ENCODE measurements at regions of chr17 and their contacts with region 1.

Region 1: GRCh38 chr17:48878918-48879898 is 13.4 kb upstream of the ATP5MC1 start:
- DNase-seq: peak; percentile 78
- H3K4me3 Mint-ChIP-seq: no peak overlapping the region
- H3K27ac Mint-ChIP-seq: no peak overlapping the region
- H3K4me1 Mint-ChIP-seq: no peaks in the 10 kb centered on the region
- H3K27me3 Mint-ChIP-seq: no peaks in the 10 kb centered on the region
- CTCF ChIP-seq: peak; percentile 83

Region 2: GRCh38 chr17:48678141-48678971 is 200.9 kb before region 1 on chr17:
- CTCF ChIA-PET with region 1: interaction called, 89 read pairs
- POLR2A ChIA-PET with region 1: interaction called, 7 read pairs
- intact Hi-C with region 1: loop called (anchors 2 kb)
- DNase-seq: peak; percentile 72
- H3K4me3 Mint-ChIP-seq: no peak overlapping the region
- H3K27ac Mint-ChIP-seq: no peak overlapping the region
- H3K4me1 Mint-ChIP-seq: peaks cover 4% of the 10 kb centered on the region
- H3K27me3 Mint-ChIP-seq: peaks cover 19% of the 10 kb centered on the region
- CTCF ChIP-seq: peak; percentile 96

Region 3: GRCh38 chr17:48804925-48805411 is 74.2 kb before region 1 on chr17:
- CTCF ChIA-PET with region 1: interaction called, 56 read pairs
- POLR2A ChIA-PET with region 1: interaction called, 4 read pairs
- intact Hi-C with region 1: loop called (anchors 1 kb)
- DNase-seq: peak; percentile 67
- H3K4me3 Mint-ChIP-seq: no peak overlapping the region
- H3K27ac Mint-ChIP-seq: no peak overlapping the region
- H3K4me1 Mint-ChIP-seq: peaks cover 4% of the 10 kb centered on the region
- H3K27me3 Mint-ChIP-seq: peaks cover 11% of the 10 kb centered on the region
- CTCF ChIP-seq: peak; percentile 89

Region 4: GRCh38 chr17:48841395-48841831 is 37.8 kb before region 1 on chr17:
- CTCF ChIA-PET with region 1: interaction called, 10 read pairs
- POLR2A ChIA-PET with region 1: interaction called, 3 read pairs
- intact Hi-C with region 1: no loop called
- DNase-seq: peak; percentile 66
- H3K4me3 Mint-ChIP-seq: peak overlapping the region; percentile 72
- H3K27ac Mint-ChIP-seq: peak overlapping the region; percentile 90
- H3K4me1 Mint-ChIP-seq: peaks cover 28% of the 10 kb centered on the region
- H3K27me3 Mint-ChIP-seq: no peaks in the 10 kb centered on the region
- CTCF ChIP-seq: no peak

Region 5: GRCh38 chr17:48860456-48860855 is 18.8 kb before region 1 on chr17:
- CTCF ChIA-PET with region 1: interaction called, 16 read pairs
- POLR2A ChIA-PET with region 1: interaction called, 5 read pairs
- intact Hi-C with region 1: no loop called
- DNase-seq: no peak
- H3K4me3 Mint-ChIP-seq: no peak overlapping the region
- H3K27ac Mint-ChIP-seq: no peak overlapping the region
- H3K4me1 Mint-ChIP-seq: no peaks in the 10 kb centered on the region
- H3K27me3 Mint-ChIP-seq: no peaks in the 10 kb centered on the region
- CTCF ChIP-seq: no peak

Region 6: DNA sequence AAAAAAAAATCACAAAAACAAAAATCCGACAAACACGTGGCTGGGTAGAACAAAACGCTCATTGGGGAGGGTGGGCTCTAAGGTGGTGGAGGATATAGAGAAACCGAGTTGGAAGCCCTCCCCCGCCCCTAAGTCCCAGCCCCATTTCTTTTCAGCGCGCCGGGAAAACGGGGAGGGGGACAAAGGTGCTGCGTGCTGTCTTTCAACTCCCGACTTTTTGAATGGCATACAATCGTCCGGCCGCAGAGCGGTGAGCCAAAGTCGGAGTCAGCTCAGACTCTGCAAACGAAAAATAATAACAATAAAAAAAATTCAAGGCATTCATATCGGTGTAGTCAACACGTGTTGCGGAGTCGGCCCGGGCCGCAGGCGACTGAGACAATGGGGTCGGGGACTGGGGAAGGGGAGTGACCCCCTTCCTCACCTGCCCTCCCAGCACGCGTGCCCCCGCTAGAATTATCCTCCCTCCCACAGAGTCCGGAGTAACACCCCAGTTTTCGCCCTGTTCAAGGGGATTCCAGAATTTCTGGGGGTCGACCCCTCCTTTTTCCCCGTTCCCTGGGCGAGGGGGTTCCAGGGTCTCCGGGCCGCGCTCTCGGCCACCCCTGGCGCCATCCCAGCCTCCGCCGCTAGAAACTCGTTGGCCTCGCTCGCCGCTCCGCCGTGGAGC is 116.2 kb after region 1 on chr17:
- CTCF ChIA-PET with region 1: no interaction called
- POLR2A ChIA-PET with region 1: no interaction called
- intact Hi-C with region 1: no loop called
- DNase-seq: no peak
- H3K4me3 Mint-ChIP-seq: no peak overlapping the region
- H3K27ac Mint-ChIP-seq: no peak overlapping the region
- H3K4me1 Mint-ChIP-seq: no peaks in the 10 kb centered on the region
- H3K27me3 Mint-ChIP-seq: peaks cover 93% of the 10 kb centered on the region
- CTCF ChIP-seq: no peak

Region 7: GRCh38 chr17:49031965-49032928 is 153.0 kb after region 1 on chr17:
- CTCF ChIA-PET with region 1: interaction called, 23 read pairs
- POLR2A ChIA-PET with region 1: no interaction called
- intact Hi-C with region 1: loop called (anchors 1 kb)
- DNase-seq: peak; percentile 82
- H3K4me3 Mint-ChIP-seq: no peak overlapping the region
- H3K27ac Mint-ChIP-seq: no peak overlapping the region
- H3K4me1 Mint-ChIP-seq: peaks cover 12% of the 10 kb centered on the region
- H3K27me3 Mint-ChIP-seq: peaks cover 11% of the 10 kb centered on the region
- CTCF ChIP-seq: peak; percentile 52

Region 8: DNA sequence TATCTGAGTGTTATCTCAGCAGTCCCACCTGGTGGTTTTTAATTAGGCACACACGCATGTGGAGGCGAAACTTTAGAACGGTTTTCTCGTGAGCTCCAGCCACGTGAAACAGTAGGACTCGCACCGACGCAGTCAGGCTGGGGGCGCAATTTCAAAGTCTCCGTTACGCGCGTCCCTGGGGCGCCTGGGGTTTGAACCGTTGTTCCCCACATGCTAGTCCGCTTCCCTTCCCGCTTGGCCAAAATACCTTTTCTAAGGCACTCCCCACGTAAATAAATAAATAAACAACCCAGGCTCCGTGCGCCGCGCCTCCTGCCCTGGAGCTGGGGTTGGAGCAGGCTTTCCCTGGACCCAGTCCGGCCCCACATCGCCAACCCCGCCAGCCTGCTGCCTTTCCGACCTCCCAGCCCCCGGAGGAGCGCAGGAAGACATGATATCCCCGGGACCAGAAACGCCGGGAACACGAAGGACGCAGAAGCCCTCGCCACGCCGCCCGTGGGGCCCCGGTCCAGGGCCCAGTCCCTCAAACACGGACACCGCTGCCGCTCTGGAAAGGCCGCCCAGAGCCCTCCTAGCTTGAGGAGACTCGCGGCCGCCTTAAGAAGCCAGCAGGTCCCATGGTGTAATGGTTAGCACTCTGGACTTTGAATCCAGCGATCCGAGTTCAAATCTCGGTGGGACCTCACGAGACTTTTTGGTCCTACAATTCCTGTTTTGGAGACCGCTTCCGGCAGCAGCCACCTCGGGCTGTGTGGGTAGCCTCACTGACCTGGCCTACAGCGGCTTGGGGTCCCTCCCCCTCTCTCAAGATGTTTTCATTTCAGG is 312.9 kb after region 1 on chr17:
- CTCF ChIA-PET with region 1: no interaction called
- POLR2A ChIA-PET with region 1: no interaction called
- intact Hi-C with region 1: no loop called
- DNase-seq: peak; percentile 93
- H3K4me3 Mint-ChIP-seq: peak overlapping the region; percentile 96
- H3K27ac Mint-ChIP-seq: peak overlapping the region; percentile 96
- H3K4me1 Mint-ChIP-seq: no peaks in the 10 kb centered on the region
- H3K27me3 Mint-ChIP-seq: no peaks in the 10 kb centered on the region
- CTCF ChIP-seq: peak; percentile 21